ENCODE measurements at regions of chr10 and their contacts with region 1.

Region 1: DNA sequence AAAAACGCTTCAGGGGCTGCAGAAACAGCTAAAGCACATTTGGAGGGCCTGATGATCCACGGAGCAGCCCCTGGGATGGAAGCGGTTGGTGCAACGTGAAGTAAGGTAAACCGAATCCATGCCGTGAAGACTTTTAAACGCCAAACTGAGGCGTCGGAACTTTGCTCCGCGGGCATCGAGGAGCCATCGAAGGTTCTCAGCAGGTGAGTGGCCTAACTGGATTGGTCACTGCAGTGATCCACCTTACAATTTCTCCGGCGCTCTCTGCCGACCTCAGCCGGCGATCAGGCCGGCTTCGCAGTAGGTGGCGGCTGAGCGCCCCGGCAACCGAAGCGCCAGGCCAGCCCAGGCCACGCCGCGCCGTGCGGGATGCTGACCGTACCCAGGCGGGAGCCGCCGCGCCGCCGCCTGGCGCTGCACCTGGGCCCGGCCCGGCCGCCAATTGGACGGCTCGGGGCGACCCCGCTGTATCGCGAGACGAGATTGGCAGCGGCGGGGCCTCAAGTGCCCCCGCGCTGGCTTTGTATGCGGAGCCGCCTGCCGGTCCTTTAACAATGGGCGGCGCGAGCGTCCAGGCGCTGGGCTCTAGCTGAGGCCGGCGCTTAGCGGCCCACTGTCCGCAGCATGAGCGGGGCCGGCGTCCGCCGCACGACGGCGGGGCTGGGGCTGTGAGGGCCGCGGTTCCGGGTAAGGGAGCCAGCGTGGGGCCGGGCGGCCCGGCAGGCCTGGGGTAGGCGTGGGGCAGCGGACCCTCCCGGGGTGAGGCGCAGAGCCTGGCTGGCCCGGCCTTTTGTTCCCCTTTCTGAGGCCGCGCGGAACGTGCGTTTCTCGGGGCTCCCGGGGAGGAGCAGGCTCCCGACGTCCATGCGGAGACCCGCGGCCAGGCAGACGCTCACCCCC is at the start of gene CCNJ:
- DNase-seq: peak; percentile 95
- H3K4me3 Mint-ChIP-seq: peak within 1 kb of the TSS; percentile 96
- H3K27ac Mint-ChIP-seq: peak within 1 kb of the TSS; percentile 90
- H3K4me1 Mint-ChIP-seq: peaks cover 36% of the 10 kb centered on the region
- H3K27me3 Mint-ChIP-seq: peaks cover 6% of the 10 kb centered on the region
- total RNA-seq, gene CCNJ: 9.3 and 9.4 TPM in 2 replicates

Region 2: GRCh38 chr10:95907456-95908253 is 135.6 kb before region 1 on chr10 and contains the start of gene CC2D2B:
- intact Hi-C with region 1: loop called (anchors 1 kb)
- DNase-seq: peak; percentile 91
- H3K4me3 Mint-ChIP-seq: peak within 1 kb of the TSS; percentile 93
- H3K27ac Mint-ChIP-seq: peak within 1 kb of the TSS; percentile 94
- H3K4me1 Mint-ChIP-seq: peaks cover 11% of the 10 kb centered on the region
- H3K27me3 Mint-ChIP-seq: peaks cover 14% of the 10 kb centered on the region
- total RNA-seq, gene CC2D2B: 0.26 TPM in 1 of 2 replicates, not detected in the other

Region 3: GRCh38 chr10:96025566-96025965 is 17.7 kb before region 1 on chr10:
- intact Hi-C with region 1: no loop called
- DNase-seq: no peak
- H3K4me3 Mint-ChIP-seq: no peak overlapping the region
- H3K27ac Mint-ChIP-seq: no peak overlapping the region
- H3K4me1 Mint-ChIP-seq: no peaks in the 10 kb centered on the region
- H3K27me3 Mint-ChIP-seq: peaks cover 9% of the 10 kb centered on the region

Region 4: DNA sequence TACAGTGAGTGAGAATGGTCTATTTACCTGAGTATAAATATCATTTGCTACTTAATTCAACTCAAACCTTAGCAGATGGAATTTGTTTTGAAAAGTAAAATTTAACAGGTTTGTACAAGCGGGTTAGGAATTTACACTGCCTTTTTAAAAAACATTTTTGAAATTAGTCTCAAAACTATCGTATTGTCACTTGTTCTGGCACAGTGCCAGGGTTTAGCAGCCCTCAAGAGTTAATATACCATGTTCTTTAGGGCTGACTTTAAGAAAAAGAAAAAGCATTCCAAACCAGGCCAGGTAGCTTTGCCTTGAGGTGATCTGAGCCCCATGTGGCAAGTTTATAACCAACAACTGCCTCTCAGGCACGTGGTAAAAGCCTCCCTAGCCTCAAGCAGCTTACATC is 17.9 kb after region 1 on chr10:
- intact Hi-C with region 1: loop called (anchors 2 kb)
- DNase-seq: no peak
- H3K4me3 Mint-ChIP-seq: no peak overlapping the region
- H3K27ac Mint-ChIP-seq: no peak overlapping the region
- H3K4me1 Mint-ChIP-seq: peaks cover 33% of the 10 kb centered on the region
- H3K27me3 Mint-ChIP-seq: no peaks in the 10 kb centered on the region

Region 5: GRCh38 chr10:96073722-96074121 is 30.4 kb after region 1 on chr10:
- intact Hi-C with region 1: loop called (anchors 2 kb)
- DNase-seq: peak; percentile 67
- H3K4me3 Mint-ChIP-seq: peak overlapping the region; percentile 14
- H3K27ac Mint-ChIP-seq: peak overlapping the region; percentile 61
- H3K4me1 Mint-ChIP-seq: peaks cover 27% of the 10 kb centered on the region
- H3K27me3 Mint-ChIP-seq: no peaks in the 10 kb centered on the region

Region 6: DNA sequence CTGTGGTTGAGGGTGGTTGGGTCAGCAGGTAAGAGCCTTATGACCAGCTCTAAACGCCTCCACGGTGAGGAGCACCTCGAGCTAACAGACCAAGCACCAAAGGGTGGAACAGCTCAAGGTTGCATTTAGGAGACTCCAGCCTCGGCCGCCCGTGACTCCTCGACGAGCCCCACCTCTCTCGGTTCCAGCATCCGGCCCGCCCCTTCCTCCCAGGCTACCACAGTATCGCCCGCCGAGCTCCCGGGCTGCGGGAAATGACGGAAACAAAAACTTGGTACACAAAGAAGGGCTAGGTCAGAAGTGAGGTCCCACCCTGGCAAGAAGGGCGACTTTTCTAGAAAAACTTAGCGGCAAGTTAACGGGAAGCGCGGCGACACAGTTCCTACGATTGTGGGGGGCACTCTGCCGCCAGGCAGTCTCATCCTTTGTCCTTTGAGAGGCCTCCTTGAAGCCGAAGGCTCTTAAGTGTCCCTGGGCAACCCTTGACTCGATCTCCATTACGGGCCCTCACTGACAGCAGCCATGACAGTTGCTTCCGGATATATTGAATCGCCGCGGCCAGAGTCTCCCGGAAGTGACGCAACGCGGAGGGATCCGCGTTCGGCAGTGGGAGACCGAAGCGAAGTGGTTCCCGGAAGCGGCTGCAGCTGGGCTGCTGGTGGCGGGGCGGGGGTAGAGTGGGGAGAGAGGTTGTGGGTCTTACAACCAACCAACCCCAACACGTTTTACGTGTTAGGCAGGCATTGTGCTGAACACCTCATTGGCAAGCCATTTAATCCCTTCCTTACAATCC is 46.6 kb after region 1 on chr10:
- intact Hi-C with region 1: loop called (anchors 1 kb)
- DNase-seq: peak; percentile 97
- H3K4me3 Mint-ChIP-seq: peak overlapping the region; percentile 95
- H3K27ac Mint-ChIP-seq: peak overlapping the region; percentile 99
- H3K4me1 Mint-ChIP-seq: peaks cover 12% of the 10 kb centered on the region
- H3K27me3 Mint-ChIP-seq: peaks cover 17% of the 10 kb centered on the region

Region 7: DNA sequence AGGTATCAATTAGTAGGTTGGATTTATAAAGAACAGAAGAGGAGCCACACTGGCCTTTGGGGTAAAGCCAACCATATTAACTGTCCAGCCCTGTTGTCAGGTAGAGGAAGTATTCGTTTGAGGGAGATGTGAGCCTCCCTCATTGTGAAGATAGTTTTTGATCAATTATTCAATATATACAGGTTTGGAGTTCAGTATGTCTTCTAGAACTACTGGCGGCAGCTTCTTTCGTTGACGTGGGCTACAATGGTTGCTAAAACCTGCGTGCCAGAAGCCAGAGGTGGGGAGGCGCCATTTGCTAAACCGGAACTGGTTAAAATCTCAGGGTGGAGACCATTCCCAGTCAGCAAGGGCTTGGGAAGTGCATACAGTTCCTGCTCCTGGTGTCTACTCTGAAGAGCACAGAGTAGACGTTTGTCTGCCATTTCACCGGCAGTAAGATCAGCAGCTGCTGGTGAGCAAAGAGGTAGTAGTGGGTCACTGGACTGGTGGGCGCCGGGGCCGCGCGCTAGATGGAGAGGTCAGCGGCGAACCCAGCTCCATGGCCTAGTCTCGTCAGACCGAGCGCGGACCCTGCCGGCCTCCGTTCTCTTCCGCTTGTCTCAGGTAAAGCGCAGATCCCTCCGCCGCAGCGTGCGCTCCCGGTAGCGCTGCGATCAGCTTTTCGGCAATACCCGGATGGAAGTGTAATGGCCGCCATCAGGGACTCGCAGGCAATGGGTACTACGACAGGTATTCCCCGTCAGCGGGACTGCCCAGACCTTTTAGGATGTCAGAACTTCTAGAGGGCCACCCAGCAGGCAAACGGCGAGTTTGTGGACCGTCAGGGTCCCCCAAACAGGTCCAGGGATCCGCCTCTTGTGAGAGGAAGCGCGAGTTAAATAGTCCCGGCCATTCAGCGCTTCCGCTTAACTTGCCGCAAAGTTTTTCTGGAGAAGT is 86.4 kb after region 1 on chr10 and contains the start of gene ZNF518A:
- intact Hi-C with region 1: loop called (anchors 1 kb)
- DNase-seq: peak; percentile 96
- H3K4me3 Mint-ChIP-seq: peak within 1 kb of the TSS; percentile 94
- H3K27ac Mint-ChIP-seq: peak within 1 kb of the TSS; percentile 98
- H3K4me1 Mint-ChIP-seq: peaks cover 23% of the 10 kb centered on the region
- H3K27me3 Mint-ChIP-seq: peaks cover 28% of the 10 kb centered on the region
- total RNA-seq, gene ZNF518A: 16.9 and 17.2 TPM in 2 replicates

Region 8: DNA sequence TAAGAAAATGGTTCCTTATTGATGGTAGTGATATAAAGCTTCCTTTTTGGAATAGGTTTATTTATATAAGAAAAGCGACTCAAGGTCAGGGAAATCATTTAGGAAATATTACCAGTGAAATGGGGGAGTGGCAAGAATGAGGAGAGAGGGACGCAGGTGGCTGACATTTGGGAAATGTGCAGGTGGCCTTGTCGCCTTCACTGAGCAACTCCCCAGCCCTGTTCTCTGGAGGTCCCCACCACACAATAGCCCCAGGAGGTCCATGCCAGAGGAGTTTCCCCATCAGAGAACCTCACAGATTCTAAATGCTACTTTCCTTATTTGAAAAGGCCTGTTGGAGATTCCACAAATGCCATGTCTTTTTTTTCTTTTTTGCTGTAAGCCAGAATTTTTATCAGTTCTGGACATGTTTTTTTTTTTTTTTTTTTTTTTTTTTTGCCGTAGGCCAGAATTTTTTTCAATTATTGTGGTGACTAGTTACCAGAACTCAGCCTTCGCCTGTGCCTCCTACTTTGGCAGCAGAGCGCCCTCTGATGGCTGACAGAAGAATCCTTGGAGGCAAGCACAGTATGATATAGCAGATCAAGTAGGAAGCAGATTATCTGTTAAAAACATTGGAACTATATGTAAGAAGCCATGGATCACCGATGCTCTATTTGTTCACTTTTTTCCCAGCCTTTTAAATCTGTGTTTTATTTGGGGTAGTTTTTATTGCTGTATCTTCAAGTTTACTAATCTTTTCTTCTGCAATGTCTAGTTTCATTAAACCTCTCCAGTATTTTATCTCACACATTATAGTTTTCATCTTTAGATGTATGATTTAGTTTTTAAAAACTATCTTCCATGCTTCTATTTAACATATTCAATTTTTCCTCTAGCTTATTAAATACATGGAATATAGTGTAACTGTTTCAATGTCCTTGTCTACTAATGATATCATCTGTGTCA is 296.9 kb after region 1 on chr10:
- intact Hi-C with region 1: no loop called
- DNase-seq: peak; percentile 85
- H3K4me3 Mint-ChIP-seq: no peak overlapping the region
- H3K27ac Mint-ChIP-seq: no peak overlapping the region
- H3K4me1 Mint-ChIP-seq: no peaks in the 10 kb centered on the region
- H3K27me3 Mint-ChIP-seq: peaks cover 12% of the 10 kb centered on the region